ENCODE measurements at regions of chr4 and their contacts with region 1.

Region 1: DNA sequence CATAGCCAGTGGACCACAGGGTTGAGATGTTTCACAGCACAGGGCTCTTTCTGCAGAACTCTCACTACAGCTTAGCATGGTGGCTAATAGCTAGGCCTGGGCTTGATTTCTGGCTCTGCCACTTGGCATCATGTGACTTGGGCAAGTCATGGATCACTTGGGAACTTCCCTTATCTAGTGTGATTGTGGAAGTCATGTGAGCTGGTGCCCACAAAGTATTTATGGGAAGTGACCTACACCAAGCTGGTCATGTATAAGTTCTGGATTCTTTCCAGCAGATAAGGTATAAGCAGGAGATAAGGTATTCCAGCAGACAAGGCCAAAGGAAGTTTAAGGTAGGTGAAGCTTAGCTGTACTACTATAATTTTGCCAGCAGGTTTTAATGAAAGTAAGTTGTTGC is 61.0 kb downstream of the REELD1 start:
- DNase-seq: no peak
- ATAC-seq: no peak
- H3K4me3 ChIP-seq: no peak overlapping the region
- H3K4me3 Mint-ChIP-seq: no peak overlapping the region
- H3K27ac ChIP-seq: no peak overlapping the region
- H3K27ac Mint-ChIP-seq: no peak overlapping the region
- H3K4me1 ChIP-seq: no peaks in the 10 kb centered on the region
- H3K4me1 Mint-ChIP-seq: no peaks in the 10 kb centered on the region
- H3K27me3 ChIP-seq: no peaks in the 10 kb centered on the region
- H3K27me3 Mint-ChIP-seq: no peaks in the 10 kb centered on the region

Region 2: DNA sequence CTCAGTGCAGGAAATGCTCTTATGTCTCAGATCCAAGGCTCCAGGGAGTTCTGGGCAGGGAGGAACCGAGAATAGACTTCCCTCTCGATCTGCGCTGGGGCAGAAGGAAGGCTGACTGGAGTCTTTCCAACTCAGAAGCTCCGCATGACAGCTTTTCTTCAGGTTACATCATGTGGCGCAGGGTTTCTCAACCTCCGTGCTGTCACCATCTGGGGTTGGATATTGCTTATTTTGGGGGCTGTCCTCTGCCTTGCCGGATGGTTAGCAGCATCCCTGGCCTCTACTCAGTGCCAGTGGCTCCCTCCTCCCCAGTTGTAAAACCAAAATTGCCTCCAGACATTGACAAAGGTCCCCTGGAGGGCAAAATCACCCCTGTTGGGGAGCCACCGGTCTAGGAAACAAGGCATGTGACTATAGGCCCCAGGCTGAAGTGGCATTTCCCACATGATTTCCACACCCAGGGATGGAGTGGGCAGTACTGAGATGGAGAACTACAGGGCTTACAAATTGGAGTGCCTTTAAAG is 39.7 kb before region 1 on chr4:
- CTCF ChIA-PET with region 1: no interaction called
- POLR2A ChIA-PET with region 1: interaction called in 1 of 2 experiments, 12 read pairs
- DNase-seq: no peak
- ATAC-seq: no peak
- H3K4me3 ChIP-seq: no peak overlapping the region
- H3K4me3 Mint-ChIP-seq: no peak overlapping the region
- H3K27ac ChIP-seq: no peak overlapping the region
- H3K27ac Mint-ChIP-seq: no peak overlapping the region
- H3K4me1 ChIP-seq: no peaks in the 10 kb centered on the region
- H3K4me1 Mint-ChIP-seq: no peaks in the 10 kb centered on the region
- H3K27me3 ChIP-seq: no peaks in the 10 kb centered on the region
- H3K27me3 Mint-ChIP-seq: peaks cover 3 to 14% of the 10 kb centered on the region in 2 donors

Region 3: GRCh38 chr4:146359771-146360170 is 84.4 kb after region 1 on chr4:
- CTCF ChIA-PET with region 1: no interaction called
- POLR2A ChIA-PET with region 1: no interaction called
- DNase-seq: no peak
- ATAC-seq: no peak
- H3K4me3 ChIP-seq: no peak overlapping the region
- H3K4me3 Mint-ChIP-seq: no peak overlapping the region
- H3K27ac ChIP-seq: no peak overlapping the region
- H3K27ac Mint-ChIP-seq: no peak overlapping the region
- H3K4me1 ChIP-seq: no peaks in the 10 kb centered on the region
- H3K4me1 Mint-ChIP-seq: no peaks in the 10 kb centered on the region
- H3K27me3 ChIP-seq: no peaks in the 10 kb centered on the region
- H3K27me3 Mint-ChIP-seq: no peaks in the 10 kb centered on the region